ENCODE measurements at regions of chr15 and their contacts with region 1.

Region 1: GRCh38 chr15:40197434-40197833 is 36.6 kb downstream of the BUB1B start:
- DNase-seq: no peak
- H3K4me3 Mint-ChIP-seq: no peak overlapping the region
- H3K27ac Mint-ChIP-seq: peak overlapping the region; percentile 1
- H3K4me1 Mint-ChIP-seq: peaks cover 23% of the 10 kb centered on the region
- H3K27me3 Mint-ChIP-seq: no peaks in the 10 kb centered on the region

Region 2: GRCh38 chr15:40182358-40183029 is 14.9 kb before region 1 on chr15:
- CTCF ChIA-PET with region 1: interaction called, 3 read pairs
- intact Hi-C with region 1: loop called (anchors 2 kb)
- DNase-seq: no peak
- H3K4me3 Mint-ChIP-seq: no peak overlapping the region
- H3K27ac Mint-ChIP-seq: no peak overlapping the region
- H3K4me1 Mint-ChIP-seq: peaks cover 19% of the 10 kb centered on the region
- H3K27me3 Mint-ChIP-seq: no peaks in the 10 kb centered on the region